ENCODE measurements at regions of chr13 and their contacts with region 1.

Region 1: DNA sequence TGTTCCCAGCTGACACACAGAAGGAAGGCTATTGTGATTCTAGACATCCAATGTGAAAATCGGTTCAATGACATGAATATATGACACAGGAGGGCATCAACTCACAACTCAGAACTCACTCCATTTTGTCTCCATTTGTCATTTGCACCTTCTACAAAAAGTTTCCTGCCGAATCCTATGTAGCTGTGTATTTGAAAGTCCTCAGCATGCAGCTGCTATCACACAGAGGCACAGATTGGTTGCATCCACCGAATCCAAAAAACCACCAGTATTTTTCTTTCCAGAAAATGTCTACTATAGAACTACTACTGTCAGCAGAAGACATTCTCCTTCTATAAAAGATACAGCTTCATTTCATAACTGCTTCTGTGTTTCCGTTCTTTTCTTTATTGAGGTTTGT is 13.3 kb downstream of the PCDH9 start:
- DNase-seq: no peak
- ATAC-seq: no peak
- H3K4me3 ChIP-seq: no peak overlapping the region
- H3K27ac ChIP-seq: no peak overlapping the region
- H3K4me1 ChIP-seq: peaks cover 0 to 24% (median under 1%) of the 10 kb centered on the region in 12 donors
- H3K27me3 ChIP-seq: no peaks in the 10 kb centered on the region
- CTCF ChIP-seq: no peak
- POLR2A ChIP-seq: no peak

Region 2: GRCh38 chr13:66689628-66690027 is 527.2 kb before region 1 on chr13:
- intact Hi-C with region 1: loop called in 6 of 10 experiments (anchors 5 to 10 kb)
- DNase-seq: no peak
- ATAC-seq: peak in 1 of 4 donors; percentile 59
- H3K4me3 ChIP-seq: no peak overlapping the region
- H3K27ac ChIP-seq: no peak overlapping the region
- H3K4me1 ChIP-seq: peaks cover 0 to 7% (median 0%) of the 10 kb centered on the region in 12 donors
- H3K27me3 ChIP-seq: no peaks in the 10 kb centered on the region
- CTCF ChIP-seq: peak in 6 of 12 donors; percentile 33 to 55 (median 38)
- POLR2A ChIP-seq: no peak

Region 3: GRCh38 chr13:67075239-67075638 is 141.6 kb before region 1 on chr13:
- intact Hi-C with region 1: loop called in 9 of 10 experiments (anchors 2 to 5 kb)
- DNase-seq: no peak
- ATAC-seq: peak; percentile 32 to 79 (median 64)
- H3K4me3 ChIP-seq: peak overlapping the region in 8 of 12 donors; percentile 15 to 53 (median 34)
- H3K27ac ChIP-seq: no peak overlapping the region
- H3K4me1 ChIP-seq: peaks cover 0 to 6% (median 0%) of the 10 kb centered on the region in 12 donors
- H3K27me3 ChIP-seq: no peaks in the 10 kb centered on the region
- CTCF ChIP-seq: peak in 9 of 12 donors; percentile 14 to 59 (median 43)
- POLR2A ChIP-seq: no peak

Region 4: GRCh38 chr13:67395577-67395976 is 178.7 kb after region 1 on chr13:
- intact Hi-C with region 1: no loop called
- DNase-seq: no peak
- ATAC-seq: no peak
- H3K4me3 ChIP-seq: no peak overlapping the region
- H3K27ac ChIP-seq: no peak overlapping the region
- H3K4me1 ChIP-seq: no peaks in the 10 kb centered on the region
- H3K27me3 ChIP-seq: no peaks in the 10 kb centered on the region
- CTCF ChIP-seq: no peak
- POLR2A ChIP-seq: no peak